ENCODE measurements at regions of chr19 and their contacts with region 1.

Region 1: DNA sequence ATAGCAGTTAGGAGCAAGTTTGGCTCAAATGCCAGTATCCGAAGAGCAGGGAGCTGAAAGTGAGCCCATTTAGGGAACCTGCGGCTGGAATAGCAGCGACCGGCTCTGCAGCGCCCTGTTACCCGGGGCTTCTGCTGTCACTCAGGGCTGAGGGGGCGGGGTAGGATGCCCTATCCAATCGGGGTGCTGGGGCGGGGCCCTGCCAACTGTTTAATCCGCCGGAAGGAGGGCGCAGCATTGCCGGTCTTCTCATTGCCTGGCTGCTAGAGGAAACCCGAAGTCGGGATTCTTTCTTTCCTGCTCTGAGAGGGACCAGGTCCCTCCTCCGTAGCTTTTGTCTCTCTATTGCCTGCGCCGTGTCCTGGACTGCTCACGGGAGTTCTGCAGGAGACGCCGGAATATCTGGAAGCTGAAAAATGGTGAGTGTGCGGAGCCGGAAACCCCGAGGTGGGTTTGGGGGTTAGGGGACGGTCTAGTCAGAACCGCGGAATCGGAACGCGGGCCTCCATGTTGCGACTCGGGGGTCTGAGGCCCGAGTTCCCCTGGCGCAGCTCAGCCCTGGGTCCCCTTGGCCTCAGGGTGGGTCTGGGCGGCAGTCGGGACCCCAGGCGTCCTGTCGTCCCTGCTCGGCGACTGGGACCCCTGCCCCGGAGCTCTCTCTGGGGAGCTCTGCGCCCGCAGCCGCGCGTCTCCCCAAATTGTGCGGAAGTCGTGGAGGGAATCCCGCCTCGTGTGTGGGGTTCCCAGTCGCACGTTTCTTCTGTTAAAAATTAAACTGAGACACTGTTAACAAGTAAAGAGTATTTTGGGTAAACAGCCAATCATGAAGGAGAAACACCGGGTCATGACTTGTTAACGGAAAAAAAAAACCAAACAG is 22.8 kb downstream of the ZNF763 start:
- DNase-seq: peak; percentile 83 to 92 (median 85)
- H3K4me3 ChIP-seq: peak overlapping the region; percentile 66 to 67
- H3K4me3 Mint-ChIP-seq: peak overlapping the region; percentile 91 to 99 (median 98)
- H3K27ac ChIP-seq: peak overlapping the region; percentile 73
- H3K27ac Mint-ChIP-seq: peak overlapping the region; percentile 95 to 99 (median 97)
- H3K4me1 ChIP-seq: peaks cover 7% of the 10 kb centered on the region
- H3K4me1 Mint-ChIP-seq: peaks cover 15 to 29% (median 18%) of the 10 kb centered on the region in 4 donors
- H3K27me3 ChIP-seq: no peaks in the 10 kb centered on the region
- H3K27me3 Mint-ChIP-seq: no peaks in the 10 kb centered on the region

Region 2: GRCh38 chr19:11814029-11814699 is 173.5 kb before region 1 on chr19 and contains the start of gene ZNF440:
- CTCF ChIA-PET with region 1: no interaction called
- POLR2A ChIA-PET with region 1: interaction called, 4 read pairs
- intact Hi-C with region 1: loop called (anchors 5 kb)
- DNase-seq: peak; percentile 74 to 82 (median 74)
- H3K4me3 ChIP-seq: peak within 1 kb of the TSS; percentile 64 to 89
- H3K4me3 Mint-ChIP-seq: peak within 1 kb of the TSS; percentile 93 to 96 (median 95)
- H3K27ac ChIP-seq: peak within 1 kb of the TSS; percentile 56
- H3K27ac Mint-ChIP-seq: peak within 1 kb of the TSS; percentile 55 to 91 (median 86)
- H3K4me1 ChIP-seq: peaks cover 17% of the 10 kb centered on the region
- H3K4me1 Mint-ChIP-seq: peaks cover 13 to 29% (median 21%) of the 10 kb centered on the region in 4 donors
- H3K27me3 ChIP-seq: no peaks in the 10 kb centered on the region
- H3K27me3 Mint-ChIP-seq: no peaks in the 10 kb centered on the region
- total RNA-seq, gene ZNF440: 18.0 to 18.5 TPM

Region 3: DNA sequence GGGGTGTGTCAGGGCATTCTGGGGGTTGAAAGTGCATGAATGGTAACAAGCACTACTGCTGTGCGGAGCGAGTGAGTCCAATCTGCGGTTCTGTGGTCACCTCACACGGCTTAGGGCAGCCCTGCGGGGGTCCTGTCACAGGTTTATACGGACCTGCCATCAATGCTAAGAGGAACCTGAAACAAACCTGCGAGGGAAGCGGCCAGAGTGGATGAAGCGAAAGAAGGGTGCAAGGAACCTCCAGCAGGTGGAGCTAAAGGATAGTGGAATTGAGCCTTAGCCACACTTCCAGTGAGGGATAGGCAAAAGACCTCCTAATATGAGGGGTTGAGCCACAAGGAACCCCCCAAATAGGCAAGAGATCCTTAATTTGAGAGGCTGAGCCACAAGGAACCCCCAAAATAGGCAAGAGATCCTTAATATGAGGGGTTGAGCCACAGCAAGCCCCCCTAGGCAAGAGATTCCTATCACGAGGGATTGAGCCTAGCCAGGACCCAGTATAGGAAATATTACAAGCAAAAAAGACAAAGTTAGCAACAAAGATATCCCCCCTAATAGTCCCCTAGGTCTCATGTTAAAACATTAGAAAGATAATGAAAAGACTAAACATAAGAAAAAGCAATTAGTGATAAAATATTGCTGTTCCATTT is 106.4 kb before region 1 on chr19:
- CTCF ChIA-PET with region 1: interaction called, 94 read pairs
- POLR2A ChIA-PET with region 1: interaction called, 5 read pairs
- intact Hi-C with region 1: loop called (anchors 1 kb)
- DNase-seq: peak; percentile 52 to 67 (median 59)
- H3K4me3 ChIP-seq: no peak overlapping the region
- H3K4me3 Mint-ChIP-seq: peak overlapping the region in 1 of 8 donors; percentile 24
- H3K27ac ChIP-seq: no peak overlapping the region
- H3K27ac Mint-ChIP-seq: no peak overlapping the region
- H3K4me1 ChIP-seq: peaks cover 3% of the 10 kb centered on the region
- H3K4me1 Mint-ChIP-seq: peaks cover 0 to 2% (median under 1%) of the 10 kb centered on the region in 4 donors
- H3K27me3 ChIP-seq: no peaks in the 10 kb centered on the region
- H3K27me3 Mint-ChIP-seq: peaks cover 0 to 1% of the 10 kb centered on the region in 2 donors

Region 4: GRCh38 chr19:11964858-11965645 is 22.6 kb before region 1 on chr19 and contains the start of gene ZNF763:
- CTCF ChIA-PET with region 1: interaction called, 104 read pairs
- POLR2A ChIA-PET with region 1: interaction called, 84 read pairs
- intact Hi-C with region 1: loop called (anchors 1 kb)
- DNase-seq: peak; percentile 83 to 93 (median 85)
- H3K4me3 ChIP-seq: peak within 1 kb of the TSS; percentile 79 to 86
- H3K4me3 Mint-ChIP-seq: peak within 1 kb of the TSS; percentile 93 to 98 (median 96)
- H3K27ac ChIP-seq: peak within 1 kb of the TSS; percentile 91
- H3K27ac Mint-ChIP-seq: peak within 1 kb of the TSS; percentile 92 to 97 (median 96)
- H3K4me1 ChIP-seq: peaks cover 21% of the 10 kb centered on the region
- H3K4me1 Mint-ChIP-seq: peaks cover 16 to 32% (median 26%) of the 10 kb centered on the region in 4 donors
- H3K27me3 ChIP-seq: no peaks in the 10 kb centered on the region
- H3K27me3 Mint-ChIP-seq: no peaks in the 10 kb centered on the region
- total RNA-seq, gene ZNF763: 14.3 to 16.4 TPM

Region 5: GRCh38 chr19:12000152-12000981 is 12.7 kb after region 1 on chr19:
- CTCF ChIA-PET with region 1: interaction called, 17 read pairs
- POLR2A ChIA-PET with region 1: interaction called, 6 read pairs
- intact Hi-C with region 1: no loop called
- DNase-seq: no peak
- H3K4me3 ChIP-seq: no peak overlapping the region
- H3K4me3 Mint-ChIP-seq: peak overlapping the region in 1 of 8 donors; percentile 10
- H3K27ac ChIP-seq: no peak overlapping the region
- H3K27ac Mint-ChIP-seq: peak overlapping the region in 2 of 7 donors; percentile 72 to 73
- H3K4me1 ChIP-seq: peaks cover 14% of the 10 kb centered on the region
- H3K4me1 Mint-ChIP-seq: peaks cover 15 to 23% (median 18%) of the 10 kb centered on the region in 4 donors
- H3K27me3 ChIP-seq: no peaks in the 10 kb centered on the region
- H3K27me3 Mint-ChIP-seq: no peaks in the 10 kb centered on the region

Region 6: DNA sequence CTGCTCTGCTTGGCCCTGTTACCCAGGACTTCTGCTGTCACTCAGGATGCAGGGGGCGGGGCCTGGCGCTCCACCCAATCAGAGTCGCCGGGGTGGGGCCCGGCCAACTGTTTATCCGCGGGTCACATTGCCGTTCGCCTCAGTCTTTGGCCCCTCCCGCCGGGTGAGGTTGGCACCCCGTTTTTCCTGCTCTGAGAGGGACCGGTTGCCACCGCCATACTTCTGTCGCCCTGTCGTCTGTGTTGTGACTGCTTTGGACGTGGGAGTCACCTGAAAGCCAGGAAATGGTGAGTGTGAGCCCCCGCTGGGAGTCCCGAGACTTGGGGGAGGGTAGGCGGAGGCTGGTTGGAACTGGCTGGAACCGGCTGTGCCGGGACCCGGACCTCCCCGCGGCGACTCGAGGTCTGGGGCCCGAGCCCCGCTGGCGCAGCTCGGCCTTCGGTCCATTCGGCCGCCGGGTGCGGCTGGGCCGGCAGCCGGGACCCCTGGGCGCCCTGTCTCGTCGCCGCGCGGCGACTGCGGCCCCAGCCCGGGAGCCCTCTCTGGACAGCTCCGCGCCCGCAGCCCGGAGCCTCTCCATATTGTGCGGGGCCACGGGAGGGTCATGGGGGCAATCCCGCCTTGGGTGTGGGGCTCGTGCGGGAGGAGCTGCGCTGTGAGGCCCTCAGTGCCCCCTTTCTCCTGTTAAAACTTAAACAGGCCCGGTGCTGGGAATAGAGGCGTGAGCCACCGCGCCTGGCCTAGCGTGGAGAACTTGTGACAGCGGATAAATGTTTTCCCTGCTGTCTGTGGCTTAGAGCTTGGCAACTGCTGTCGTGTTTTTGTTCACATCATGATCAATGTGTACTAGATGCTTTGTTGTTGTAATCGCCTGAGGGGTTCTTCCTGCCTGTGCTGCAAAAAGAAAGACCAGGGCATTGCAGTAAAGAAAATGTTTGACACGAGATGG is 77.2 kb after region 1 on chr19 and contains the start of gene ZNF844:
- CTCF ChIA-PET with region 1: interaction called, 10 read pairs
- POLR2A ChIA-PET with region 1: no interaction called
- intact Hi-C with region 1: no loop called
- DNase-seq: peak; percentile 48 to 62 (median 56)
- H3K4me3 ChIP-seq: peak within 1 kb of the TSS; percentile 57 to 71
- H3K4me3 Mint-ChIP-seq: peak within 1 kb of the TSS; percentile 83 to 90 (median 86)
- H3K27ac ChIP-seq: peak within 1 kb of the TSS; percentile 11
- H3K27ac Mint-ChIP-seq: peak within 1 kb of the TSS in 6 of 7 donors; percentile 47 to 87 (median 74)
- H3K4me1 ChIP-seq: peaks cover 7% of the 10 kb centered on the region
- H3K4me1 Mint-ChIP-seq: peaks cover 3 to 13% (median 8%) of the 10 kb centered on the region in 4 donors
- H3K27me3 ChIP-seq: no peaks in the 10 kb centered on the region
- H3K27me3 Mint-ChIP-seq: no peaks in the 10 kb centered on the region
- total RNA-seq, gene ZNF844: 8.8 to 9.8 TPM

Region 7: GRCh38 chr19:12075538-12076139 is 88.0 kb after region 1 on chr19:
- CTCF ChIA-PET with region 1: no interaction called
- POLR2A ChIA-PET with region 1: no interaction called
- intact Hi-C with region 1: no loop called
- DNase-seq: no peak
- H3K4me3 ChIP-seq: no peak overlapping the region
- H3K4me3 Mint-ChIP-seq: no peak overlapping the region
- H3K27ac ChIP-seq: no peak overlapping the region
- H3K27ac Mint-ChIP-seq: no peak overlapping the region
- H3K4me1 ChIP-seq: no peaks in the 10 kb centered on the region
- H3K4me1 Mint-ChIP-seq: peaks cover 0 to 4% (median 0%) of the 10 kb centered on the region in 4 donors
- H3K27me3 ChIP-seq: no peaks in the 10 kb centered on the region
- H3K27me3 Mint-ChIP-seq: no peaks in the 10 kb centered on the region

Measured in CD4-positive, alpha-beta memory T cell (primary cell).